ENCODE measurements at regions of chr11 and their contacts with region 1.

Region 1: GRCh38 chr11:33542921-33543320 is 157.7 kb downstream of the C11orf91 start:
- DNase-seq: peak in 1 of 2 donors; percentile 60
- ATAC-seq: no peak
- H3K4me3 ChIP-seq: no peak overlapping the region
- H3K27ac ChIP-seq: no peak overlapping the region
- H3K4me1 ChIP-seq: no peaks in the 10 kb centered on the region
- H3K27me3 ChIP-seq: peaks cover 0 to 3% of the 10 kb centered on the region in 2 donors

Region 2: GRCh38 chr11:33687733-33688479 is 145.0 kb after region 1 on chr11:
- intact Hi-C with region 1: loop called (anchors 2 to 10 kb)
- DNase-seq: no peak
- ATAC-seq: no peak
- H3K4me3 ChIP-seq: no peak overlapping the region
- H3K27ac ChIP-seq: no peak overlapping the region
- H3K4me1 ChIP-seq: peaks cover 0 to 3% of the 10 kb centered on the region in 2 donors
- H3K27me3 ChIP-seq: no peaks in the 10 kb centered on the region

Region 3: DNA sequence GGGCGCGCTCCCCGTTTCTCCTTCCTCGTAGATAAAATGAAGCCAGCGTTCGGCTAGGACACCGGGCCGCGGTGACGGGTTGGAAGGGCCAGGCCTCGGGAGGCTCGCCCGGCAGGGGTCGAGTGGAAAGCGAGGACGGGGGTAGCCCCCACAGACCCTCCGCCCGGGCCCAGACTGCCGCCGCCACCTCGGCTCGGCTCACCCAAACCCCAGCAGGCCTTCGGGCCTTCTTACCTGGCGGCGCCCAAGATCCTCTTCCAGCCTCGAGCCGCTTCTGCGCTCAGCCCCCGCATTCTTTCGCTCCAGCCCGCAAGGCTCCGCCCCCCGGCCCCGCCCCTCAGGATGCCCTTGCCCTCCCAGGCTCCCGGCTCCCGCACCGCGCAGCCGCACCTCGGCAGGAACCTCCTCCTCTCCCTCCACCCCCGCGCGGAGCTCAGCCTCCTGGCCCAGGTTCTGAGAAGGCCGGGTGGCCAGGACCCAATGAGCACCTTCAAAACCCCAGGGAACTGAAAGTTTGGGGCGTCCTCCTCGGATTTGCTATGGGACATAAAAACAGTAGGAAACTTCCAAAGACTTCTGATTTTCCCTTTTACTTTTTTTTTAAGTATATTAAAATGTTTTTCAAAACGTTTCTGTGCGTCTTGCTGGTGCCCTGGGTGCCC is 193.4 kb after region 1 on chr11 and contains the start of gene CD59:
- intact Hi-C with region 1: loop called (anchors 5 to 10 kb)
- DNase-seq: peak; percentile 98 to 99
- ATAC-seq: peak; percentile 96
- H3K4me3 ChIP-seq: peak within 1 kb of the TSS; percentile 73 to 97
- H3K27ac ChIP-seq: peak within 1 kb of the TSS in 1 of 2 donors; percentile 82
- H3K4me1 ChIP-seq: peaks cover 0 to 3% of the 10 kb centered on the region in 2 donors
- H3K27me3 ChIP-seq: no peaks in the 10 kb centered on the region
- total RNA-seq, gene CD59: 665 to 881 TPM

Region 4: DNA sequence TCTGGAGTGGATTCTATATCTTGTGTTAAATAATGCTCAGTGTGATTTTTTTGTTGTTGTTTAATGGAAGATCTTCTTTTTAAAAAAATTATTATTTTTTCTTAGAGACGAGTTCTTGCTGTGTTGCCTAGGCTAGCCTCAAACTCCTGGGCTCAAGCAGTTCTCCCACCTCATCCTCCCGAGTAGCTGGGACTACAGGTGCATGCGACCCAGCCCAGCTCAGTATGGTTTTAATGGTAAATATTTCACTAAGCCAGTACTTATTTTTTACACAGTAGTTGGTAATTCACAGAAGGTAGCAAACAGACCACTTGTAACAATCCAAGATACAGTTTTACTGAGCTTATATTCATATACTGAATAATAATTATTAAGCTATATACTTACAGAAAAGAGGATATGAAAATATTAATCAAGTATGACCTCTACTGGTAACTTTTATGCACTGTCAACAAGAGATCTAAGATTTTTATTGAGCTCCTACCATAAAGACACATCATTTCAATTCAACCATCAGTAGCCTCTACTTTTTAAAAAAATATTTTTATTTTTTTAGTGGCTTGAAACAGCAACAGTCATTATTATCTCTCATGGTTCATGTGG is 199.4 kb after region 1 on chr11:
- intact Hi-C with region 1: loop called (anchors 5 to 10 kb)
- DNase-seq: no peak
- ATAC-seq: no peak
- H3K4me3 ChIP-seq: no peak overlapping the region
- H3K27ac ChIP-seq: no peak overlapping the region
- H3K4me1 ChIP-seq: peaks cover 0 to 2% of the 10 kb centered on the region in 2 donors
- H3K27me3 ChIP-seq: no peaks in the 10 kb centered on the region

Region 5: DNA sequence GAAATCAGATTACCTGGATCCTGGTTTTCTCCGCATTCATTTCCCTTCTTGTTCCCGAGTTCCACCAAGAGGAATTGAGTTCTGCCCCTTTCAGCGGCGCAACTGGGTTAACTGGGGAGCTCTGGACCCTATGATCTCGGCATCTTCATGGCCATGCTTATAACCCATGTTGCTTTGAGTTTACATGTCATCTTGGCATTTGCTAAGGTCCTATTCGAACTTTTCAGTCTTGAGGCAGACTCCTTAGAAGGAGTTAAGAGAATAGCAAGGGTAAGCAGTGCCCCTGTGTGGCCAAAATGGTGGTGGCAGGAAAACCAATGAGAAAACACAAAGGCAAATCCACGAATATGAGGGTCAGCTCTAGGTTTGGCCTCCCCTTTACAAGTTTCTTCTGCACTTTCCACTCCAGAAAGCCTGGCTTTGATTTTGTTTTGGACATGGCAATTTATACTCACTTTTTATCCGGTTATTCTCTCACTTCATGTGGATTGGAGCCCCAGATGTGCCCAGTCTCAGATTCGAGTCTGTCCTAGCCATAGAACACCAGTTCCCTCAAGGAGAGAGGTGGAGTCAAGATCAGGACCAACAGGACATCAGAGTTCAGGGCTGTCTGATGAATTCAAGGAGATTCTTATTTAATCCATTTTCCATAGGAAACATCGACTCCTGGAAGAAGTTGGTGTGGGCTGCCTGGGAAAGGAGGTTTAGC is 286.7 kb after region 1 on chr11:
- intact Hi-C with region 1: loop called in 1 of 2 experiments (anchors 10 kb)
- DNase-seq: peak in 1 of 2 donors; percentile 62
- ATAC-seq: peak; percentile 84
- H3K4me3 ChIP-seq: peak overlapping the region in 1 of 2 donors; percentile 3
- H3K27ac ChIP-seq: no peak overlapping the region
- H3K4me1 ChIP-seq: no peaks in the 10 kb centered on the region
- H3K27me3 ChIP-seq: no peaks in the 10 kb centered on the region

Measured in aorta (tissue), 5 donors.